ENCODE measurements at regions of chr18 and their contacts with region 1.

Region 1: DNA sequence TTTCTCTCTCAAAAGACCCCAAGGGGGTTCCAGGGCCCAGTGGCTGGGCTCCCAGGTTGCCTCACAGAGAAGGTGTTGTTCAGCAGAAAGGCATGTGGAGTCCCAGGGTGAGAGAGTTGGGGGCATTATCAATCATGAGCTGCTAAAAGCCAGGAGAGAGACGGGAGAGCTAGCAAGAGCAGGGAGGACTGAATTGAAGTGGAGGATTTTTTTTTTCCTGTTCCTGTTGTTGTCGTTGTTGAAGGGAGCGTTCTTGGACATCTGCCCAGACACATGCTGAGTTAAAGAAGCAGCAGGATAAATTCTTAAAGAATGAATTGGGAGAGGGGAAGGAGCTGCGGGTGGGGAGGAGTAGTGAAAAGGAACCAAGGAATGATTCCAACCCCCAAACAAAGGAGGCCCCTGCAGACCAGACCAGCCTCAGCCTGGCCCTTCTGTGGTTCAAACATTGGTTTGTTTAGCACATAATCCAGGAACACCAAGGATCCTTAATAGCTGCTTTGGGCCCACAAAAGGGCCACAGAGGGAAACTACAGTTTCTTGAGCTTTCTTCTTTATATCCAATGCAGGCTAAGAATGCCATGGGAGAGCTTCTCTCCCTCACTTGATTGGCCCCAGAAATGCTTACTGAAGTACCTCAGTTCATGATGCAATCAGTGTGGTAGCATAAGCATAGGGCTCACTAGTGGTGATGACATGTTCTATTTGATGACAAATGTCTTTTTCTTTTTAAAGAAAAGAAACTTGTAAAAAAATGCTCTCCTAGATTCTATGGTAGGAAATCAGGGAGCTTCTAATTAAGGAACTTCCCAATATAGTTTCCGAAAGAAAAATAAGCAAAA is 146.0 kb downstream of the SETBP1 start:
- DNase-seq: peak; percentile 57 to 74
- H3K4me3 ChIP-seq: no peak overlapping the region; the same call in 1 of the 2 replicates
- H3K27ac ChIP-seq: peak overlapping the region; percentile 71
- H3K4me1 ChIP-seq: peaks cover 41% of the 10 kb centered on the region
- H3K27me3 ChIP-seq: no peaks in the 10 kb centered on the region
- CTCF ChIP-seq: no peak

Region 2: GRCh38 chr18:44715245-44715644 is 111.4 kb before region 1 on chr18:
- CTCF ChIA-PET with region 1: no interaction called
- POLR2A ChIA-PET with region 1: no interaction called
- intact Hi-C with region 1: no loop called
- DNase-seq: no peak
- H3K4me3 ChIP-seq: no peak overlapping the region
- H3K27ac ChIP-seq: no peak overlapping the region
- H3K4me1 ChIP-seq: peaks cover 15% of the 10 kb centered on the region
- H3K27me3 ChIP-seq: no peaks in the 10 kb centered on the region
- CTCF ChIP-seq: no peak

Region 3: GRCh38 chr18:44725300-44726096 is 101.1 kb before region 1 on chr18:
- CTCF ChIA-PET with region 1: no interaction called
- POLR2A ChIA-PET with region 1: no interaction called
- intact Hi-C with region 1: no loop called
- DNase-seq: peak in 1 of 2 experiments; percentile 50
- H3K4me3 ChIP-seq: no peak overlapping the region
- H3K27ac ChIP-seq: peak overlapping the region; percentile 66
- H3K4me1 ChIP-seq: peaks cover 38% of the 10 kb centered on the region
- H3K27me3 ChIP-seq: no peaks in the 10 kb centered on the region
- CTCF ChIP-seq: no peak

Region 4: DNA sequence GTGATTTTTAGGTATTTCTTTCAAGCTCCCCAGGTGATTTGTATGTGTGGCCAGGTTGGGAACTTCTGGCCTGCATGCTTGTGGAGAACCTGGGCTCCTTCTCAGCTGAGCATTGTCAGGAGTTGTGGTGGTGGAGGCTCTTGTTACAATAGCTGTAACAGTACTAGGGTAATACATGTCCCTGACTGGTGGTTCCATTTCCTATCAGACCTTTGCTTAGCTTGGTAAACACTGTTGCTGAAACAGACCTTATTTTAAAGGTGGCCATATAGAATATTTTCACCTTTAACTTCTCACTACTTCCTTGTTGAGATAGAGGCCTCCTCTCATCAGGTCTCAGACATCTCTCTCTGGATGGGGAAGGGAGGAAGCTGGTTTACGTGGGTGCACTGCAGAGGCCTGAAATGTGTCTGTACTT is 66.7 kb before region 1 on chr18:
- CTCF ChIA-PET with region 1: no interaction called
- POLR2A ChIA-PET with region 1: no interaction called
- intact Hi-C with region 1: loop called (anchors 10 kb)
- DNase-seq: no peak
- H3K4me3 ChIP-seq: no peak overlapping the region
- H3K27ac ChIP-seq: no peak overlapping the region
- H3K4me1 ChIP-seq: peaks cover 34% of the 10 kb centered on the region
- H3K27me3 ChIP-seq: no peaks in the 10 kb centered on the region
- CTCF ChIP-seq: no peak

Region 5: GRCh38 chr18:44895176-44895798 is 68.6 kb after region 1 on chr18:
- CTCF ChIA-PET with region 1: no interaction called
- POLR2A ChIA-PET with region 1: no interaction called
- intact Hi-C with region 1: loop called (anchors 10 kb)
- DNase-seq: peak; percentile 30 to 45
- H3K4me3 ChIP-seq: no peak overlapping the region
- H3K27ac ChIP-seq: no peak overlapping the region
- H3K4me1 ChIP-seq: peaks cover 8% of the 10 kb centered on the region; the same call in 1 of the 2 replicates
- H3K27me3 ChIP-seq: no peaks in the 10 kb centered on the region
- CTCF ChIP-seq: peak; percentile 70

Region 6: GRCh38 chr18:44996261-44996660 is 169.6 kb after region 1 on chr18:
- CTCF ChIA-PET with region 1: no interaction called
- POLR2A ChIA-PET with region 1: no interaction called
- intact Hi-C with region 1: no loop called
- DNase-seq: no peak
- H3K4me3 ChIP-seq: no peak overlapping the region
- H3K27ac ChIP-seq: no peak overlapping the region
- H3K4me1 ChIP-seq: no peaks in the 10 kb centered on the region
- H3K27me3 ChIP-seq: no peaks in the 10 kb centered on the region
- CTCF ChIP-seq: no peak